Activated B cell treated with CpG ODN at 0.5 μM for 24 hours (primary cell): ENCODE measurements at regions of chr3 and their contacts with region 1.

Region 1: DNA sequence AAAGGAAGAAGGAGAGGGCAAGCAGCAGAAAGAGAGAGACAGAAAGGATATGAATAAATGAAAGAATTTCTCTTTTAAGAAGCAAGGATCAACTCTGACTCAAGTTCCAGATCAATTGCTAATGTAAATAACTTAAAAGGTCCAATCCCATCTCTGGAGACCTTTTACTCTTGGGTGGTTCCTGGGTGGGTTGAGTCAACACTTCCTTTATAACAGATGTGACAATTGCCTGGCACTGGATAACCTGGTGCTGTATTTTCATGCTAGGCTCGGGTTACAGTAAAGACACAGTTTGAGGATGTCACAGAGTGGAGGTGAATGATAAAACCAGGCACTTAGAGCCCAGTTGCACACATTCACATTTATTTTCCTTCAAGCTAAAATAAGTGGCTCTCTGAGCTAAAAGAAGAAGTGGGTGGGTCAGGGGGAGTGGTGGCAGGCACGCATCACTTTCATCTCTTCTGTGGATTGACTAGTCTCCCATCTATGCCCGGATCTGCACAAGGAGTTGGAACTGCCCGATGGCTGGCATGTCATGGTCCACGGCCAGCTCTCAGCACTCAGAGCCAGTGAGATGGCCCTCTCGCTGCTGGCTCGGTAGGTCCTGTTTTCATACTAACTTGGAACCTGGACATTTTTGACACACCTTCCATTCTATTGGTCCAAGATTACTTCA is 465.8 kb downstream of the FOXP1 start:
- DNase-seq: no peak
- ATAC-seq: peak; percentile 69
- H3K4me3 Mint-ChIP-seq: peak overlapping the region; percentile 64
- H3K27ac Mint-ChIP-seq: peak overlapping the region; percentile 90
- H3K4me1 Mint-ChIP-seq: peaks cover 85% of the 10 kb centered on the region
- H3K27me3 Mint-ChIP-seq: no peaks in the 10 kb centered on the region
- CTCF ChIP-seq: no peak

Region 2: GRCh38 chr3:70999730-71000129 is 118.0 kb before region 1 on chr3:
- CTCF ChIA-PET with region 1: no interaction called
- POLR2A ChIA-PET with region 1: no interaction called
- intact Hi-C with region 1: no loop called
- DNase-seq: no peak
- ATAC-seq: no peak
- H3K4me3 Mint-ChIP-seq: no peak overlapping the region
- H3K27ac Mint-ChIP-seq: peak overlapping the region; percentile 50
- H3K4me1 Mint-ChIP-seq: peaks cover 33% of the 10 kb centered on the region
- H3K27me3 Mint-ChIP-seq: no peaks in the 10 kb centered on the region
- CTCF ChIP-seq: no peak

Region 3: DNA sequence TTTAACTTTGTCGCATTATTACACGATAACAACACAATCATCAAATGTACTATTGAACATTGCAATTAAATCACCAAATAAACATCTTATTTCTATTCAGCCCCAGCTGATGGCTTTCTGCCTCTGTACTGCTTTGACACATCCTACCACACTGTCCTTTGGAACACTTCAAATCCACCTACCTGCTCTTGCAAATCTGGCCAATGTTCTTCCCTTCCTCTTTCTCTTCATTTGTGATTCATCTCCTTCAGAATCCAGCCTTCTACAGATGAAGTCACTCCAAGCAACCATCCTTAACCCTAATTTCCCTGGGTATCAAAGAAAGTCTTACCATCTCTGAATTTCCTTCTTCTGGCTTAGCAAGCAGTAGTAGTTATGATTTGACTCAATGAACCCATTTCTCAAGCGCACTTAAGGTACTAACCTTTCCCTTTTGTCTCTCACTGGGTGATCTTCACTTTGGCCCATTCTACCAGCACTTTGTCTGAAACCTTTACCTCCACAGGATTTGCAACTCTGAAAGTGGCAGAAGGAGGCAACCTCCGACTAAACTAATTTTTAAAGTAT is 37.1 kb before region 1 on chr3:
- CTCF ChIA-PET with region 1: no interaction called
- POLR2A ChIA-PET with region 1: interaction called, 138 read pairs
- intact Hi-C with region 1: no loop called
- DNase-seq: no peak
- ATAC-seq: no peak
- H3K4me3 Mint-ChIP-seq: peak overlapping the region; percentile 57
- H3K27ac Mint-ChIP-seq: peak overlapping the region; percentile 74
- H3K4me1 Mint-ChIP-seq: peaks cover 93% of the 10 kb centered on the region
- H3K27me3 Mint-ChIP-seq: no peaks in the 10 kb centered on the region
- CTCF ChIP-seq: no peak

Region 4: GRCh38 chr3:71095511-71096291 is 22.0 kb before region 1 on chr3:
- CTCF ChIA-PET with region 1: interaction called, 4 read pairs
- POLR2A ChIA-PET with region 1: interaction called, 138 read pairs
- intact Hi-C with region 1: loop called (anchors 2 kb)
- DNase-seq: no peak
- ATAC-seq: no peak
- H3K4me3 Mint-ChIP-seq: no peak overlapping the region
- H3K27ac Mint-ChIP-seq: peak overlapping the region; percentile 78
- H3K4me1 Mint-ChIP-seq: peaks cover 91% of the 10 kb centered on the region
- H3K27me3 Mint-ChIP-seq: no peaks in the 10 kb centered on the region
- CTCF ChIP-seq: no peak

Region 5: GRCh38 chr3:71103430-71103921 is 14.2 kb before region 1 on chr3:
- CTCF ChIA-PET with region 1: interaction called, 4 read pairs
- POLR2A ChIA-PET with region 1: interaction called, 21 read pairs
- intact Hi-C with region 1: loop called (anchors 2 kb)
- DNase-seq: no peak
- ATAC-seq: no peak
- H3K4me3 Mint-ChIP-seq: no peak overlapping the region
- H3K27ac Mint-ChIP-seq: peak overlapping the region; percentile 71
- H3K4me1 Mint-ChIP-seq: peaks cover 94% of the 10 kb centered on the region
- H3K27me3 Mint-ChIP-seq: no peaks in the 10 kb centered on the region
- CTCF ChIP-seq: no peak

Region 6: DNA sequence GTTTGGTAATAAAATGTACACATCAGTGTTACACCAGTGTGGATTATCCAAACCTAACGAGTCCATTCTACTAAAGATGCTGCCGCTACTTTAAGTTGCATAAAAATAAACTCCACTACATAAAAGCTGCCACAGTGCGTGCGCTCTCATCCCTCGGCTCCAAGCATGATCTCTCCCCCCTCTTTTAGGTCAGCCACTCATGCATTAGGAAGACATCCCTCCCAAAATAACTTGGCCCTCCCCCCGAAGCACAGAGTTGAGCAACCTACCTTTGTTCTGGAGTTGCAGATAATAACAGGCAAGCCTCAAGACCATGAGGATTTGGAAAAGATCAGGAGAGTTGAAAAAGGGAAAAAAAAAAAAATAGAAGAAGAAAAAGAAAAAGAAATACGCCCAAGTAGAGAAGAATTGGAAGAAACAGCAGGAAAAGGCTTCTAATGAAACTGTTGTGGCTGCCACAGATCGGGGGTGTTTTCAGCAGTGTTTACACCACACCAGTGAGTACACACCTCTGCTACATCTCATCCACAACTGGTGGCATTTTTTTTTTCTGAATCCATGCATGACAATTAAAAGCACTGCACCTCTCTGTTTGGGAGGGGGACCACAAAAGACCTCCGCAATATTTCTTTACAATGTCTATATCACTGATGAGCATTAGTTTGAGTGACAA is 126.6 kb after region 1 on chr3:
- CTCF ChIA-PET with region 1: no interaction called
- POLR2A ChIA-PET with region 1: no interaction called
- intact Hi-C with region 1: no loop called
- DNase-seq: no peak
- ATAC-seq: no peak
- H3K4me3 Mint-ChIP-seq: no peak overlapping the region
- H3K27ac Mint-ChIP-seq: peak overlapping the region; percentile 62
- H3K4me1 Mint-ChIP-seq: peaks cover 66% of the 10 kb centered on the region
- H3K27me3 Mint-ChIP-seq: no peaks in the 10 kb centered on the region
- CTCF ChIP-seq: no peak